GM18951 (cell line): ENCODE measurements at regions of chr12 and their contacts with region 1.

Region 1: GRCh38 chr12:64256166-64256800 is 34.2 kb upstream of the KICS2 start:
- POLR2A ChIP-seq: no peak

Region 2: DNA sequence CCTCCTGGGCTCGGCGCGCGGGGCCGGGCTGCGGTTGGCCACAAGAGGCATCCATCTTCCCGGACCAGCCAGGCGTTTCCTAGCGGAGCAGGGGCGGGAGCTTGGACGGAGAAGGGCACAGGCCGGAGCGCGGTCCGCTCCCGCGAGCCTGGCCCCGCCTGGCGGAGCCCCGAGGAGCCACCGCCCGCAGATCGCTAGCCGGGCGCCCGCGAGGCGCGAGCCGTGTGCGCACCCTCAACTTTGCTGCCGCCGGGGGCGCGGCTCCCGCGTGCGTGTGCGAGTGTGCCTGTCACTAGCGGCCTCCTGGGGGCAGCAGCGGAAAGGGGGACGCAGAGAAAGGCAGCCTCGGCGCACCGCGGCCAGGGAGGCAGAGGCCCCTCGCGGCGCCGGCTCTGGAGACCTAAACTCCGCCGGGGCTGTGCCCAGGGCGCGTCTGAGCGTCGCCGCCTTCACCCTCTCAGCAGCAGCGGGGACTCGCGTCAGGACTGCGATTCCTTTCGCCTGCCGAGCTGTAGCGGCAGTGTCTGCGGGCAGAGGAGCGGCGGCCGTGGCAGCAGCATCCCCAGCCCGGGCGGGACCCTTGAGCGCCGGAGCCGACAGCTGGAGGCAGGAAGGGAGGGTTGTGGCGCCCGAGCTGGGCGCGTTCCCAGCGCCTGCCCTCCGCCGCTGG is 412.4 kb before region 1 on chr12:
- in situ Hi-C with region 1: loop called (anchors 5 kb)
- POLR2A ChIP-seq: peak; percentile 34

Region 3: DNA sequence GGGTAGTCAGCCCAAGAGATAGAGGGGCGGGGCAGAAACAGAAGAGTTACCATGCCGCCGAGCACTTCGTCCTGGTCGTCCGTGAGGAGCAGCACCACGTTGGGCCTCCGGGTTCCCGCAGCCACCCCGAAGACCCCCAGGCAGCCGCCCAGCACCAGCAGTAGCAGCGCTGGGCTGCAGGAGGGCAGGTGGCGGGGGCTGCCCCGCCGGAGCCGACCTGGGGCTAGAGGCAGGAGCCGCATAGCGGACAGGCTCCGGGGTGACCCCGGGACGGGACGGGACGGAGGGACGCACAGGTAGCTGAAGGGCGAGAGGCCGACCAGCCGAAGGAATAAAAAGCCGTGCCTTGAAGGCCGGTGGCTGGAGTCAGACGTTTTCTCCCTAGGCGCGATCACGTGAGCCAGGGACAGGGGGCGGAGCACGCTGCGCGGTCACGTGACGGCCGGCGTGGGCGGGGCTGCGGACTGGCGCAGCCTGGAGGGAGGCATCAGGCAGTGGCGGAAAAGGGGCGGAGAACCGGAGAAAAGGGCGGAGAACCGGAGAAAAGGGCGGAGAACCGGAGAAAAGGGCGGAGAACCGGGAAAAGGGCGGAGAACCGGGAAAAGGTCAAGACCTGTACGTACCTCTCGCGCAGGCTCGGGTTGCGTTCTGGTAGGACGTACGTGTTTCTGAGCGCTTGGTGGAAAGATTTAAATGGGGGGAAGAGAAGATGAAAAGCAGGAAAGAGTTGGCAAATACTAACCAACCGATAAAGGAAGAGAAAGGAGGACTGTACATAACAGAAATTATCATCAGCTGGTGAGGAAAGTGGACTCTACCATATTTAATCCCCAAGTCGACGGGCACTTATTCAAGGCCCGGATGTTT is 503.0 kb after region 1 on chr12 and contains the start of gene GNS:
- in situ Hi-C with region 1: no loop called
- POLR2A ChIP-seq: peak; percentile 73